HepG2 (cell line): ENCODE measurements at regions of chr12 and their contacts with region 1.

Region 1: GRCh38 chr12:80033448-80033847 is 65.9 kb upstream of the OTOGL start:
- DNase-seq: no peak
- ATAC-seq: no peak
- H3K4me3 ChIP-seq: no peak overlapping the region
- H3K27ac ChIP-seq: no peak overlapping the region
- H3K4me1 ChIP-seq: no peaks in the 10 kb centered on the region
- H3K27me3 ChIP-seq: no peaks in the 10 kb centered on the region
- CTCF ChIP-seq: no peak
- EP300 ChIP-seq: no peak
- POLR2A ChIP-seq: no peak
- RAD21 ChIP-seq: no peak

Region 2: DNA sequence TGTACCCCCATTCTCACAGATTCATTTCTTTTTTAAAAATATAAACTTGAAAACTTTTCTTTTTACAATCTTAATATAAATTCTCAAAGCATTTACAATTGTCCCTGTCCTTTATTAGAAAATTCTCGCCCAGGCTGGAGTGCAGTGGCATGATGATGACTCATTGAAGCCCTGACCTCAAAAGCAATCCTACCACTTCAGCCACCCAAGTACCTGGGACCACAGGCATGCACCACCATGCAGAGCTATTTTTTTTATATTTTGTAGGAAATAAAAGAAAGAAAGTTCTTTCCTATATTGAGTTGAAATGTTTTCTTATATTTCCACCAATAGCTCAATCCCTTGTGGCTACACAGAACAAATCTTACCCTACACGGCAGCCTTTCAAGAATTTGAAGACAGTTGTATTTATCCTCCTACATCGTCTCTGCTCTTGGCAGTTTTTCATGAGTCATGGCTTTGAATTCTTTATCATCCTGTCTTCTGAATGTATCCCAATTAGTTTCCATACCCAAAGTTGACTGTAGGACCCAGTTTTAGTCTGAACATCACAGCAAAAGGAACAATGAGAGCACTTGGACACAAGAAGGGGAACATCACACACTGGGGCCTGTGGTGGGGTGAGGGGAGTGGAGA is 1116.5 kb before region 1 on chr12:
- CTCF ChIA-PET with region 1: no interaction called
- POLR2A ChIA-PET with region 1: no interaction called
- in situ Hi-C with region 1: no loop called
- intact Hi-C with region 1: loop called (anchors 5 kb)
- DNase-seq: no peak
- ATAC-seq: no peak
- H3K4me3 ChIP-seq: no peak overlapping the region
- H3K27ac ChIP-seq: no peak overlapping the region
- H3K4me1 ChIP-seq: no peaks in the 10 kb centered on the region
- H3K27me3 ChIP-seq: no peaks in the 10 kb centered on the region
- CTCF ChIP-seq: no peak
- EP300 ChIP-seq: no peak
- POLR2A ChIP-seq: no peak
- RAD21 ChIP-seq: no peak